ENCODE measurements at regions of chr21 and their contacts with region 1.

Region 1: DNA sequence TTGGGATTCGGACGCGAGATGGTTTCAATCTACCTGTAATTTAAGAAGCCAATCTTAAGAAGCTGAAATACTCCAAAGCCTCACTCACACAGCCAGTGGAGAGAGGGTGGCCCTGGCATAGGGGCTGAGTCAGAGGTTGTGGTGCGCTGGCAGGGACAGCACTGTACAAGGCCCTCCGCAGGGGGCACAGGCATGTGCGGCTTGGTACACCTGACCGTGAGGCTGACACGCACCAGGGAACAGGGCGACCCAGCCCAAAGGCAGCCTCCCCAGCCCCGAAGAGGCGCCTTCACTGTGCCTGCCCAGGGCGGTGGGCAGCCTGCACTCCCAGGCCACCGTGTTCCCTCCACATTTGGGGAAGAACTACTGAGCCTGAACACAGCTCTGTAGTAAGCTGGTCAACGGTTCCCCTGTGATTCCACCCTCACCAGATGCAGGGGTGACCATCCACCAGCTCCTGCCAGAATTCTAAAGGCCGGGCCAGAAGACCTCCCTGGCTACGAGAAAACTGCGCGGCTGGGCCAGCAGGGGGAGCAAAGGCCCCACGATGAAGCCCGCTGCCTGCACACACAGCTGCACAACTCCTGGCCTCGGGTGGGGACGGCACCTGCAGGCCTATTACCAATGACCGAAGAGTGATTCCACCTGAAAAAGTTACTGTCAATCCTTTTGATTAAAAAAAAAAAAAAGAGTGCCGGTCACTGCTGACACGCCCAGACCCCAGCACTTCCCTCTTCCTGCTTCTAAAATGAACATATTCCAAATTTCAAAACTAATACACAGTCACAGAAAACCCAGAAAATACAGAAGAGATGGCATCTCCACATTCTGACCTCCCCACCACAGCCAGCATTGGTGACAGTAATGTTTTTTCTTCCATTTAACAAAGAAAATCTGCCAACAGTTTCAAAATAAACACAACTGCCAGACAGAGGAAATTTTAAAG is 49.6 kb upstream of the RIPK4 start:
- DNase-seq: peak in 1 of 2 donors; percentile 77
- H3K4me3 ChIP-seq: no peak overlapping the region
- H3K27ac ChIP-seq: peak overlapping the region; percentile 3 to 57
- H3K4me1 ChIP-seq: peaks cover 0 to 4% of the 10 kb centered on the region in 2 donors
- H3K27me3 ChIP-seq: no peaks in the 10 kb centered on the region
- CTCF ChIP-seq: peak; percentile 64 to 87 (median 75)

Region 2: GRCh38 chr21:41283211-41283818 is 533.2 kb before region 1 on chr21:
- intact Hi-C with region 1: loop called (anchors 5 kb)
- DNase-seq: peak in 1 of 2 donors; percentile 70
- H3K4me3 ChIP-seq: no peak overlapping the region
- H3K27ac ChIP-seq: no peak overlapping the region
- H3K4me1 ChIP-seq: no peaks in the 10 kb centered on the region
- H3K27me3 ChIP-seq: no peaks in the 10 kb centered on the region
- CTCF ChIP-seq: peak; percentile 67 to 82 (median 76)

Region 3: DNA sequence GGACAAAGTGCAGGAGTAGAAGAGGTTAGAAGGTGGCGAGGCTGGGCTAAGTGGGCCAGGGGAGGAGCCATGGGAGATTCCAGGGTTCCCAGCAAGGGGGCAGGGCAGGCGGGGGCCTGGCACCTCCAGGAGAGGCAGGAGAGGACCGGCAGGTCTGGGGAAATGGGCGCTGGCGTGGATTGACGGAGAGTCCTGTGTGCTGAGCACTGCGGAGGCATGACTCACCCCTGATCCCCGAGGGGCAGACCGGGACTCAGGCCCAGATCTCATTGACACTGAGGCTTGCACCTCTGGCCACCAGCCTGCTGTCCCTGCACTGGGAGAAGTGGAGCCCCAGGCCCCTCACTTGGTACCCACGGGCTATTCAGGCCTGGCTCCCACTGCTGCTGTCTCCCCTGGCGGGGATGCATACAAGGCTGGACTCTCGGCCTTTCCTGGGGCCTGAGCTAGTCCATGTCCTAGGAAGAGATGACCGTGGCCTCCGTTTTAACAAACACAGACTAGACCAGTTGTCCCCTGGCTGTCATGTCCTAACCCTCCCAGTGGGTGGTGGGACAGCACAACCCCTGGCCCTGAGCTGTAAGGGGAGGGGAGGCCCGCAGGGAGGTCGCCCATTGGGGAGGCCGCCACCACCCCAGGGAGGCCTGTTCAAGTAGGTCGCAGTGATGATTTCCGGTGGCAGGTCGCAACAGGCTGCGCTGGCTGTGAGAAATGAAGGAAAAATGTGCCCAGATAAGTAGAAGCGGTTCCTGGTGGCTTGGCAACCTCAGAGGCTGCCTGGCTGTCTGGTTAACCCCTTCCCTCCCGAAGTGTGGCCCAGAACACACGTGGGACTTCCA is 89.3 kb before region 1 on chr21:
- intact Hi-C with region 1: loop called (anchors 1 kb)
- DNase-seq: peak; percentile 62 to 93
- H3K4me3 ChIP-seq: no peak overlapping the region
- H3K27ac ChIP-seq: peak overlapping the region; percentile 83 to 91
- H3K4me1 ChIP-seq: peaks cover 9 to 17% of the 10 kb centered on the region in 2 donors
- H3K27me3 ChIP-seq: no peaks in the 10 kb centered on the region
- CTCF ChIP-seq: no peak

Region 4: DNA sequence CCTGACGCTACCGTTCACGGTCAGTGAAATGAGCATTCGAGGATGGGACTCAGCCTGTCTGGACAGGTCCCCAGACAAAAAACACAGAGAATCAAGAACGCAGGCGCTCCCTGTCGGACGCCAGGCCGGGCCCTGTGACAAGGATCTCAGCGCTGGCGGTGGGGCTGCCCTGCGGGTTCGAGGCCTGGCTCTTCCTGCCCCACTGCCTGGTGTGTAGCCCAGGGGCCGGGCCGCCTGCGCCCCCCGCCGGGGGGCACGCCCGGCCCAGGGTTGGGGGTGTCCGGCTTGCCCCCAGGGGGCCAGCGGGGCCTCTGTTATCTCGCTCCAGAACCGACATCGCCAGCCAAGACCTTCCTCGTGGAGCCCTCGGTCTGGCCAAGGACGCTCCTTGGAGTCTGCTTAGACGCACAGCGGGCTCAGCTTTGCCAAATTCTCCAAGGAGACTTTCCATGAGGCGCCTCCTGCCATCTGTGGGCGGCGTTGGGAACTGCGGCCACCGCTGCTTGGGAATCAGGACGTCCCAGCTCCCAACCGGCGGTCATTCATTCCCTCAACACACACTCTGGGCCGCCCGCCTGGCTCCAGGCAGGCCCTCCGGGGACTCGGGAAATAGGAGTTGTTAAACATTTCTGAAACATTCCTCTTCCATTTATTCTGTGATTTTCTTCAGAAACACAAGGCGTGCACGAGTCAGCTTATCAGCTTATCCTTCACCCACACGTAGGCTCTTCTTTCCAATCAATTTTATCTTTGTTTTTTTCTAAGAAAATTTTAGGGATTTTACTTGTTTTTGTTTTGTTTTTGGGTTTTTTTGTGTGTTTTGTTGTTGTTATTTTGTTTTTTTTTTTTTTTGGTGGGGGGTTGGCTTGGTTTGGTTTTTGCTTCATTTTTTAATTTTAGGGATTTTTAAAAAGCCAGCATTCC is 38.3 kb before region 1 on chr21:
- intact Hi-C with region 1: loop called (anchors 1 kb)
- DNase-seq: peak; percentile 59 to 95
- H3K4me3 ChIP-seq: peak overlapping the region; percentile 37 to 51
- H3K27ac ChIP-seq: peak overlapping the region; percentile 64 to 79
- H3K4me1 ChIP-seq: peaks cover 0 to 3% of the 10 kb centered on the region in 2 donors
- H3K27me3 ChIP-seq: no peaks in the 10 kb centered on the region
- CTCF ChIP-seq: peak; percentile 89 to 97 (median 95)

Region 5: GRCh38 chr21:42117229-42117966 is 300.9 kb after region 1 on chr21:
- intact Hi-C with region 1: loop called (anchors 1 kb)
- DNase-seq: peak in 1 of 2 donors; percentile 89
- H3K4me3 ChIP-seq: peak overlapping the region in 1 of 2 donors; percentile 32
- H3K27ac ChIP-seq: no peak overlapping the region
- H3K4me1 ChIP-seq: no peaks in the 10 kb centered on the region
- H3K27me3 ChIP-seq: no peaks in the 10 kb centered on the region
- CTCF ChIP-seq: peak; percentile 91 to 95 (median 95)